ENCODE measurements at regions of chr4 and their contacts with region 1.

Region 1: GRCh38 chr4:40193016-40193571 is 3.7 kb upstream of the RHOH start:
- DNase-seq: peak in 8 of 9 donors; percentile 41 to 80 (median 74)
- ATAC-seq: peak; percentile 44
- H3K4me3 ChIP-seq: peak overlapping the region; percentile 61
- H3K4me3 Mint-ChIP-seq: peak overlapping the region; percentile 96 to 100 (median 99)
- H3K27ac ChIP-seq: peak overlapping the region; percentile 100
- H3K27ac Mint-ChIP-seq: peak overlapping the region; percentile 93 to 100 (median 99)
- H3K4me1 ChIP-seq: peaks cover 23 to 47% of the 10 kb centered on the region in 2 donors
- H3K4me1 Mint-ChIP-seq: peaks cover 47 to 80% (median 65%) of the 10 kb centered on the region in 7 donors
- H3K27me3 ChIP-seq: no peaks in the 10 kb centered on the region
- H3K27me3 Mint-ChIP-seq: peaks cover 0 to 4% (median 0%) of the 10 kb centered on the region in 5 donors

Region 2: DNA sequence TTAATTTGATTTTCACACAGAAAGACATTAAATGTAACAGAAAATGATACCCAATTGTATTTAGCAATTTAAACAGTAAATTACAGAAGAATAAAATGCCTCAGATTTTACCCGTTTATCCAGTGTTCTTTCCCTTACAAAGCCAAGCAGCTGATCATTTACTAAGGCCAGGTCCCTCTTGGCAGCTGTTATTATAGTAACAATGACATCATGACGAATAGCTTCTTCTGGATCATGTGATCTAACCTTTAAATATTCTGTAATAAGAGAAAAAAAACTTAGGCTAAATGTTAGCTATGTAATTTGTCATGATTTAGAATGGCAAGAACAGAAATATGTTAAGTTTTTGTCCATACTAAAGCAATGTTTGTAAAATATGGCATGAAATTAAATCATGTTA is 284.8 kb before region 1 on chr4:
- CTCF ChIA-PET with region 1: no interaction called
- POLR2A ChIA-PET with region 1: no interaction called
- intact Hi-C with region 1: no loop called
- DNase-seq: no peak
- ATAC-seq: no peak
- H3K4me3 ChIP-seq: no peak overlapping the region
- H3K4me3 Mint-ChIP-seq: no peak overlapping the region
- H3K27ac ChIP-seq: no peak overlapping the region
- H3K27ac Mint-ChIP-seq: no peak overlapping the region
- H3K4me1 ChIP-seq: no peaks in the 10 kb centered on the region
- H3K4me1 Mint-ChIP-seq: peaks cover 0 to 3% (median 0%) of the 10 kb centered on the region in 7 donors
- H3K27me3 ChIP-seq: no peaks in the 10 kb centered on the region
- H3K27me3 Mint-ChIP-seq: no peaks in the 10 kb centered on the region

Region 3: GRCh38 chr4:40178672-40179071 is 14.4 kb before region 1 on chr4:
- CTCF ChIA-PET with region 1: interaction called, 3 read pairs
- POLR2A ChIA-PET with region 1: interaction called, 62 read pairs
- intact Hi-C with region 1: loop called (anchors 2 kb)
- DNase-seq: no peak
- ATAC-seq: no peak
- H3K4me3 ChIP-seq: no peak overlapping the region
- H3K4me3 Mint-ChIP-seq: peak overlapping the region in 1 of 10 donors; percentile 29
- H3K27ac ChIP-seq: no peak overlapping the region
- H3K27ac Mint-ChIP-seq: peak overlapping the region in 5 of 9 donors; percentile 26 to 71 (median 57)
- H3K4me1 ChIP-seq: peaks cover under 1 to 2% of the 10 kb centered on the region in 2 donors
- H3K4me1 Mint-ChIP-seq: peaks cover 16 to 36% (median 31%) of the 10 kb centered on the region in 7 donors
- H3K27me3 ChIP-seq: no peaks in the 10 kb centered on the region
- H3K27me3 Mint-ChIP-seq: no peaks in the 10 kb centered on the region

Region 4: DNA sequence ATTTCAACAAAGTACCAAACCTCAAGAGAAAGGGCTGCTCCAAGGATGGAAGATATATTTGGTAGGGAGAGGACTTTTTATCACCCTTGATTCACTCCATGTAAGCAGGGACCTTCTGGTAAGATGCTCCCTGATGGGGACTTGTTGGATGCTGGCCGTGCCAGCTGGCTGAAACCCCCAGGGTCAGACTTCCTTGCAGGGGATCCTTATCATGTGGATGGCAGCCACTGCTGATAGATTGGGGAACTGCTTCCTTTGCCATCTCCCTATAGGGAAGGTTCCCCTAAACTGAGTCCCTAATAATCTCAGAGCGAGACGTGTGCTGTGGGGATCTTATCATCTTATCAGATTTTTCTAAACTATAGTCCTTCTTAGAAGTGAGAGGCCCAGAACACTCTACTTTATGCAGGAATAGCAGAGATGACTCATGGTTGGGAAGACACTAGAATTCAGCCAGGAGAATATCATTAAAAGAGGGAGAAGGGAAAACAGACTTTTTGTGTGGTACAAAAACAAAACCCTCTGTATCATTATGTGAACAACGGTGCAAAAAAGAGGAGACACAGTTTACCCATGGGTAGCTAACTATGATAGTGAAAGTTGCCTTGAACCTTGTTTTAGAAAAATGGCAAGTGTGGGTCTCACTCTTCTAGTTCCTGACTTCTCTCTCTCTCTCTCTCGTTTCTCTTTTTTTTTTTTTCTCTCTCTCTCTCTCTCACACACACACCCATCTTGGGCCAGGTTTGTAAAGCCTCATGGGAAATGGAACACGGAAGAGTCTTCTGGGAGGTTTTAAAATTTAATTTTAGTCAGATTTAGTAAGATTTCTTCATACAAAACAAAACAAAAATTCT is 19.8 kb after region 1 on chr4:
- CTCF ChIA-PET with region 1: interaction called, 5 read pairs
- POLR2A ChIA-PET with region 1: interaction called, 238 read pairs
- intact Hi-C with region 1: no loop called
- DNase-seq: no peak
- ATAC-seq: no peak
- H3K4me3 ChIP-seq: peak overlapping the region; percentile 41
- H3K4me3 Mint-ChIP-seq: peak overlapping the region; percentile 52 to 100 (median 76)
- H3K27ac ChIP-seq: peak overlapping the region; percentile 100
- H3K27ac Mint-ChIP-seq: peak overlapping the region; percentile 79 to 99 (median 94)
- H3K4me1 ChIP-seq: peaks cover 71 to 87% of the 10 kb centered on the region in 2 donors
- H3K4me1 Mint-ChIP-seq: peaks cover 76 to 99% (median 90%) of the 10 kb centered on the region in 7 donors
- H3K27me3 ChIP-seq: no peaks in the 10 kb centered on the region
- H3K27me3 Mint-ChIP-seq: no peaks in the 10 kb centered on the region

Region 5: GRCh38 chr4:40247350-40247749 is 54.3 kb after region 1 on chr4:
- CTCF ChIA-PET with region 1: interaction called, 3 read pairs
- POLR2A ChIA-PET with region 1: interaction called, 18 read pairs
- intact Hi-C with region 1: loop called in 1 of 2 experiments (anchors 1 kb)
- DNase-seq: peak in 7 of 9 donors; percentile 68 to 75 (median 73)
- ATAC-seq: peak; percentile 83
- H3K4me3 ChIP-seq: peak overlapping the region; percentile 14
- H3K4me3 Mint-ChIP-seq: peak overlapping the region; percentile 37 to 83 (median 69)
- H3K27ac ChIP-seq: peak overlapping the region; percentile 78
- H3K27ac Mint-ChIP-seq: peak overlapping the region; percentile 84 to 99 (median 96)
- H3K4me1 ChIP-seq: peaks cover 61 to 82% of the 10 kb centered on the region in 2 donors
- H3K4me1 Mint-ChIP-seq: peaks cover 53 to 93% (median 84%) of the 10 kb centered on the region in 7 donors
- H3K27me3 ChIP-seq: no peaks in the 10 kb centered on the region
- H3K27me3 Mint-ChIP-seq: no peaks in the 10 kb centered on the region

Region 6: DNA sequence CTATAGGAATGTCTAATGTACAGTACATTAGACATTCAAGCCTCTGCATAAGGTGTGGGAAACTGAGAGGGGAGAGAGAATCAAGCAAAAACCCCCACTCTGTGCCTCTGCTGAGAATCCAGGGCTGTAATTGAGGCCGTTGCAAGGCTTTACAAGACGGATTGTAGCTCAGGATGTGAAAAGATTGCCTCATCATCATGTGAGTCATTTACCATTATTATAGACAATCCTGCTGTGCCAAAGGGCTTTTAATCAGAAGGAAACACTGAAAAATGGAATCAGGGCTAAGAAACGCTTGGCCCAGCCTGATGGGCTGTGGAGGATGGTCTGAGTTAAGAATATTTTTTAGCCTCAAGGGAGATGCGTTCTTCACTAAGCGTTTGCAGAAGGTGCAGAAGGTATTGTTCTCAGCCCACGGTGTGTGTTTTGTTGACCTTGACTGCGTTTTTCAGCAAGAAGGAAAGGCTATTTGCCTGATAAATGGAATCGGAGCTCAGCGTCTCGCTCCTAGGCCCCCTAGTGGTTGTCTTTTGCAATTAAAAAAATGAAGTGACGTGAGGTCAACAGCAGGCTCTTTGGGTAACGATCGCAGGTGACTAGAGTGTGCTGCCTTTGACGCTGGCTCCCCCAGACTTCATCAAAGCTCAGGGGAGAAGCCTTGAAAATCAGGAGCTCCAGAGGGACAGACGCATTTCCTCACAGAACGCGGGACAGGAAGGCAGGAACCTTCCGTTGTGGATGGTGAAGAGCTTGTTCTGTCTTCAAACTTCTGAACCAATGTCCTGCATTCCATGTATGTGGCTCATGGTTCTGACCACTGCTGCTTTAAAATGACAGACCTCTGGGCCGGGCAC is 123.9 kb after region 1 on chr4:
- CTCF ChIA-PET with region 1: interaction called, 15 read pairs
- POLR2A ChIA-PET with region 1: interaction called, 229 read pairs
- intact Hi-C with region 1: no loop called
- DNase-seq: peak; percentile 39 to 83 (median 76)
- ATAC-seq: peak; percentile 81
- H3K4me3 ChIP-seq: peak overlapping the region; percentile 75
- H3K4me3 Mint-ChIP-seq: peak overlapping the region; percentile 79 to 93 (median 86)
- H3K27ac ChIP-seq: peak overlapping the region; percentile 92
- H3K27ac Mint-ChIP-seq: peak overlapping the region; percentile 90 to 99 (median 99)
- H3K4me1 ChIP-seq: peaks cover 7 to 19% of the 10 kb centered on the region in 2 donors
- H3K4me1 Mint-ChIP-seq: peaks cover 23 to 71% (median 61%) of the 10 kb centered on the region in 7 donors
- H3K27me3 ChIP-seq: no peaks in the 10 kb centered on the region
- H3K27me3 Mint-ChIP-seq: no peaks in the 10 kb centered on the region